Colonic mucosa (tissue), 4 donors: ENCODE measurements at regions of chr5 and their contacts with region 1.

Region 1: GRCh38 chr5:35003018-35003957 is 44.5 kb downstream of the AGXT2 start:
- DNase-seq: peak; percentile 56
- H3K4me3 ChIP-seq: no peak overlapping the region
- H3K27ac ChIP-seq: no peak overlapping the region
- H3K4me1 ChIP-seq: no peaks in the 10 kb centered on the region
- H3K27me3 ChIP-seq: no peaks in the 10 kb centered on the region
- CTCF ChIP-seq: peak; percentile 76

Region 2: DNA sequence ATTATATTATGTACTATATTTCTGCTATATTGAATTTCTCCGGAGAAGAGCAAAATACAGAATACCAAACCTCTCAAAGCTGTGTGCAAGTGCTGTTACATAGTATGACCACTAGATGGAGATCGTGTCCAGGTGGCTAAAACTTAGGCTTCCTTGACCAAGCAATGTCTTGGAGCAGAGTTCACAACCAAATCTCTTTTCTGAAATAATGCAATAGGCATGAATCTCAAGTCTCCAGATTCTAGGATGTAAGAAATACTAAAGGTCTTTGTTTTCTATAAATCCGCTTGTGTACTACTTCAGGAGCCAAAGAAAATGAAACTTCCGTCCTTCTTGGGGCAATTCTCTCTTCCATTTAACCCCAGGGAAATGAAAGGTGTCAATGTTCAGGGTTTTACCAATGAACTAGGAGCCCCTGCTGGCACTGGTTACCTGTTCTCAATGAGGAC is 528.7 kb before region 1 on chr5:
- intact Hi-C with region 1: loop called (anchors 5 kb)
- DNase-seq: no peak
- H3K4me3 ChIP-seq: no peak overlapping the region
- H3K27ac ChIP-seq: no peak overlapping the region
- H3K4me1 ChIP-seq: no peaks in the 10 kb centered on the region
- H3K27me3 ChIP-seq: no peaks in the 10 kb centered on the region
- CTCF ChIP-seq: peak; percentile 95